Naive thymus-derived CD4-positive, alpha-beta T cell (primary cell): ENCODE measurements at regions of chr3 and their contacts with region 1.

Region 1: GRCh38 chr3:186849374-186849975 is 7.0 kb downstream of the ADIPOQ start:
- DNase-seq: peak in 7 of 9 donors; percentile 41 to 77 (median 64)
- ATAC-seq: peak; percentile 90
- H3K4me3 ChIP-seq: no peak overlapping the region
- H3K4me3 Mint-ChIP-seq: no peak overlapping the region
- H3K27ac ChIP-seq: no peak overlapping the region
- H3K27ac Mint-ChIP-seq: peak overlapping the region in 4 of 9 donors; percentile 9 to 68 (median 37)
- H3K4me1 ChIP-seq: peaks cover 0 to 7% of the 10 kb centered on the region in 2 donors
- H3K4me1 Mint-ChIP-seq: peaks cover 14 to 30% (median 18%) of the 10 kb centered on the region in 7 donors
- H3K27me3 ChIP-seq: no peaks in the 10 kb centered on the region
- H3K27me3 Mint-ChIP-seq: peaks cover 0 to 20% (median 11%) of the 10 kb centered on the region in 5 donors

Region 2: DNA sequence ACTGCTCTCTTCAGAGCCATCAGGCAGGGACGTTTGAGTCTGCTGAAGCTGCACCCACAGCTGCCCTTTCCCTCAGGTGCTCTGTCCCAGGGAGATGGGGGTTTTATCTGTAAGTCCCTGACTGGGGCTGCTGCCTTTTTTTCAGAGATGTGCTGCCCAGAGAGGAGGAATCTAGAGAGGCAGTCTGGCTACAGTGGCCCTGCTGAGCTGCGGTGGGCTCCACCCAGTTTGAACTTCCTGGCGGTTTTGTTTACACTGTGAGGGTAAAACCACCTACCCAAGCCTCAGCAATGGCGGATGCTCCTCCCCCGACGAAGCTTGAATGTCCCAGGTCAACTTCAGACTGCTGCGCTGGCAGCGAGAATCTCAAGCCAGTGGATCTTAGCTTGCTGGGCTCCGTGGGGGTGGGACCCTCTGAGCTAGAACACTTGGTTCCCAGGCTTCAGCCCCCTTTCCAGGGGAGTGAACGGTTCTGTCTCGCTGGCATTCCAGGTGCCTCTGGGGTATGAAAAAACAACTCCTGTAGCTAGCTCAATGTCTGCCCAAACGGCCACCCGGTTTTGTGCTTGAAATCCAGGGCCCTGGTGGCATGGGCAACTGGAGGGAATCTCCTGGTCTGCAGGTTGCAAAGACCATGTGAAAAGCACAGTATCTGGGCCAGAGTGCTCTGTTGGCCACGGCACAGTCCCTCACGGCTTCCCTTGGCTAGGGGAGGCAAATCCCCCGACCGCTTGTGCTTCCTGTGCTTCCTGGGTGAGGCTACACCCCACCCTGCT is 59.8 kb after region 1 on chr3:
- CTCF ChIA-PET with region 1: interaction called, 23 read pairs
- POLR2A ChIA-PET with region 1: interaction called, 12 read pairs
- intact Hi-C with region 1: loop called in 1 of 2 experiments (anchors 1 kb)
- DNase-seq: peak; percentile 40 to 86 (median 78)
- ATAC-seq: peak; percentile 86
- H3K4me3 ChIP-seq: peak overlapping the region; percentile 48
- H3K4me3 Mint-ChIP-seq: peak overlapping the region; percentile 61 to 78 (median 72)
- H3K27ac ChIP-seq: peak overlapping the region; percentile 66
- H3K27ac Mint-ChIP-seq: peak overlapping the region; percentile 88 to 94 (median 91)
- H3K4me1 ChIP-seq: peaks cover 17 to 18% of the 10 kb centered on the region in 2 donors
- H3K4me1 Mint-ChIP-seq: peaks cover 17 to 48% (median 37%) of the 10 kb centered on the region in 7 donors
- H3K27me3 ChIP-seq: no peaks in the 10 kb centered on the region
- H3K27me3 Mint-ChIP-seq: no peaks in the 10 kb centered on the region

Region 3: GRCh38 chr3:186953011-186953487 is 103.6 kb after region 1 on chr3:
- CTCF ChIA-PET with region 1: interaction called, 4 read pairs
- POLR2A ChIA-PET with region 1: no interaction called
- intact Hi-C with region 1: loop called in 1 of 2 experiments (anchors 5 kb)
- DNase-seq: no peak
- ATAC-seq: peak; percentile 70
- H3K4me3 ChIP-seq: no peak overlapping the region
- H3K4me3 Mint-ChIP-seq: peak overlapping the region; percentile 0 to 76 (median 45)
- H3K27ac ChIP-seq: peak overlapping the region; percentile 6
- H3K27ac Mint-ChIP-seq: peak overlapping the region; percentile 18 to 91 (median 63)
- H3K4me1 ChIP-seq: peaks cover 13 to 52% of the 10 kb centered on the region in 2 donors
- H3K4me1 Mint-ChIP-seq: peaks cover 71 to 95% (median 83%) of the 10 kb centered on the region in 7 donors
- H3K27me3 ChIP-seq: no peaks in the 10 kb centered on the region
- H3K27me3 Mint-ChIP-seq: no peaks in the 10 kb centered on the region

Region 4: DNA sequence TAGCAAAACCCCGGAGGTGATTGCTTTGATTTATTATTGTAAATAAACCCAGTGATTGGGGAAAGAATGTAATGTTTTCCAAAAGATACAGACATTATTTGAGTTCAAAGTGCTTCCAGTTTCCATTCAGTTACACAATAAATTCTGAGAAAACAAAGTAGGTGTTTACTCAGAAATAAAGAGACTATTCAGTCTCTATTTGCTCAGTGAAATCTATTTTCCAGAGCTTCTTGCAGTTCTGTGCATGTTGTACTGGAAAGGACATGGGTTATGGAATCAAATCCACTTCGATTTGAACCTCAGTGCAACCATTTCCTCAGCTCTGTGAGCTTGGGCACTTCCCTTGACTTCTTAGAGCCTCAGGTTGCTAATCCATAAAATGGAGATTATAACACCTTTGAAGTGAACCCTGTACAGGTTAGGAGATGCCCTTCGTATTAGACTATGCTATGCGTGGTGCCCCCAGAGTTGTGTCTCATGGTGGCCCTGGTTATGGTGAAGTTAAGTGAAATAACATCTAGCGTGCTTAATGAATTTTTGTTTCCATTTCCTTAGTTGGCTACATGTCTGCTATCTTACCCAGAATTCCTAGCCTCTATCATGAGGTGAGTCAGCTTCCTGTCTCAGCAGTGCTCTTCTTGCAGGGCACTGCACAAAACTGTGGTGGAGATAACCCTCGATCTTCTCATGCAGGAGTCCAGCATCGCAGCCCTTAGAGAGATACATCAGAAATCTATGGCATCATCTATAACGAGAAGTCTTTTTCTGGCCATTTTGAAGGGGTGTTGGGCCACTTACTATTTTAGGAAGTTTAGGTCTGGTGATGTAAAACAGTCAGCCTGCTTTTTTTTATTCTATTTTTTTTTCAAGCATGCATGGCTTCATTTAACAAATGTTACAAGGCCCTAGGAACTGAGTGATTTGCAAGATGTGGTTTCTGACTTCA is 192.2 kb after region 1 on chr3:
- CTCF ChIA-PET with region 1: interaction called, 4 read pairs
- POLR2A ChIA-PET with region 1: interaction called, 3 read pairs
- intact Hi-C with region 1: loop called in 1 of 2 experiments (anchors 1 kb)
- DNase-seq: peak in 8 of 9 donors; percentile 38 to 77 (median 61)
- ATAC-seq: peak; percentile 93
- H3K4me3 ChIP-seq: peak overlapping the region; percentile 12
- H3K4me3 Mint-ChIP-seq: peak overlapping the region; percentile 56 to 88 (median 80)
- H3K27ac ChIP-seq: peak overlapping the region; percentile 67
- H3K27ac Mint-ChIP-seq: peak overlapping the region; percentile 93 to 99 (median 96)
- H3K4me1 ChIP-seq: peaks cover 41 to 79% of the 10 kb centered on the region in 2 donors
- H3K4me1 Mint-ChIP-seq: peaks cover 59 to 95% (median 84%) of the 10 kb centered on the region in 7 donors
- H3K27me3 ChIP-seq: no peaks in the 10 kb centered on the region
- H3K27me3 Mint-ChIP-seq: no peaks in the 10 kb centered on the region

Region 5: DNA sequence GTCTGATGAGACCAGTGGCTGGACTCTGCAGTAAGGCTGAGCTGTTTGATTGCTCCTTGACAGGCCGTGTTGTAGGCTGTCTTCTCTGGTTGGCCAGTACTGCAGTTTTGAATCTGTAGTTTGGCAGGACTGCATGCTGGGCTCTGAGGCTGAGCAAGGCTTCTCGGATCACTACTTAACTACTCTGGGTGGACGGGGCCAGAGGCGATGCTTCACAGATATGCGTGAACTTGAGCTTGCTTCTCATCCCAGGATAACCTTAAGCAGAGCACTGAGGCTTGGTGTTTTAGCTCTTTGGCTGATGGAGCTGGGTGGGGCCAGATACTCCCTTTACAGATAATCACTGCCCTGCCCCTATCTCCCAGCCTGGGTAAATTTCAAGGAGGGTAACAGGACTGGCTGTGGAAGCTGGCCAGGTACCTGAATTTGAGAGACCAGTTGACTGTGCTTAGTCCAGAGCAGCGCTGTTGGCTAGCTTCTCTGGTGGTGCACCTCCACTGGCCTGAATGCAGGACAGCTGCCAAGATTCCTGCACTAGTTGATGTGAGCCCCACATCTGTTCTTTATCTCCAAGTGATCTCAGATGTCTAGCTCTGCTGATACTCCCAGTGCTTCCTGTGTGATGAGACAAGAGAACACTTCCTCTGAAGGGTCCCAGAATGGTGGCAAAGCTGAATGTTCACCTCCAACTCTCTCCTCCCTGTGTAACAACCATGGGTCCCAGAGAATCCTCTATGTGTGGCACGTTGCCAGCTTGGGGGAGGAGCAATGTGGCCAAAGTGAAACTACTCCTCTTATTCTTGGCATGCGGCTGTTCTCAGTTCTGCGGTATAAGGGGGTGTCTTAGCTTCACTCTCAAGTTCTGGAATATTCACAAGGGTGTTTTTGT is 252.0 kb after region 1 on chr3:
- CTCF ChIA-PET with region 1: interaction called, 8 read pairs
- POLR2A ChIA-PET with region 1: no interaction called
- intact Hi-C with region 1: loop called in 1 of 2 experiments (anchors 1 kb)
- DNase-seq: peak; percentile 11 to 51 (median 38)
- ATAC-seq: peak; percentile 76
- H3K4me3 ChIP-seq: peak overlapping the region; percentile 34
- H3K4me3 Mint-ChIP-seq: peak overlapping the region; percentile 62 to 89 (median 78)
- H3K27ac ChIP-seq: no peak overlapping the region
- H3K27ac Mint-ChIP-seq: peak overlapping the region; percentile 52 to 89 (median 72)
- H3K4me1 ChIP-seq: peaks cover 18 to 20% of the 10 kb centered on the region in 2 donors
- H3K4me1 Mint-ChIP-seq: peaks cover 15 to 40% (median 26%) of the 10 kb centered on the region in 7 donors
- H3K27me3 ChIP-seq: no peaks in the 10 kb centered on the region
- H3K27me3 Mint-ChIP-seq: no peaks in the 10 kb centered on the region

Region 6: GRCh38 chr3:187150599-187150998 is 301.1 kb after region 1 on chr3:
- CTCF ChIA-PET with region 1: interaction called, 7 read pairs
- POLR2A ChIA-PET with region 1: no interaction called
- intact Hi-C with region 1: loop called (anchors 1 kb)
- DNase-seq: peak; percentile 30 to 57 (median 43)
- ATAC-seq: peak; percentile 60
- H3K4me3 ChIP-seq: no peak overlapping the region
- H3K4me3 Mint-ChIP-seq: no peak overlapping the region
- H3K27ac ChIP-seq: no peak overlapping the region
- H3K27ac Mint-ChIP-seq: peak overlapping the region in 1 of 9 donors; percentile 38
- H3K4me1 ChIP-seq: no peaks in the 10 kb centered on the region
- H3K4me1 Mint-ChIP-seq: peaks cover 0 to 32% (median 10%) of the 10 kb centered on the region in 7 donors
- H3K27me3 ChIP-seq: no peaks in the 10 kb centered on the region
- H3K27me3 Mint-ChIP-seq: peaks cover 0 to 48% (median 0%) of the 10 kb centered on the region in 5 donors

Region 7: GRCh38 chr3:187223799-187224198 is 374.3 kb after region 1 on chr3:
- CTCF ChIA-PET with region 1: no interaction called
- POLR2A ChIA-PET with region 1: no interaction called
- intact Hi-C with region 1: loop called in 1 of 2 experiments (anchors 1 kb)
- DNase-seq: no peak
- ATAC-seq: no peak
- H3K4me3 ChIP-seq: no peak overlapping the region
- H3K4me3 Mint-ChIP-seq: no peak overlapping the region
- H3K27ac ChIP-seq: no peak overlapping the region
- H3K27ac Mint-ChIP-seq: peak overlapping the region in 1 of 9 donors; percentile 58
- H3K4me1 ChIP-seq: no peaks in the 10 kb centered on the region
- H3K4me1 Mint-ChIP-seq: peaks cover 0 to 3% (median 0%) of the 10 kb centered on the region in 7 donors
- H3K27me3 ChIP-seq: no peaks in the 10 kb centered on the region
- H3K27me3 Mint-ChIP-seq: peaks cover 0 to 16% (median 7%) of the 10 kb centered on the region in 5 donors